GM18951 (cell line): ENCODE measurements at regions of chr14 and their contacts with region 1.

Region 1: GRCh38 chr14:61025251-61026223 is 44.5 kb downstream of the SLC38A6 start:
- POLR2A ChIP-seq: no peak

Region 2: GRCh38 chr14:60632777-60633176 is 392.8 kb before region 1 on chr14:
- in situ Hi-C with region 1: loop called (anchors 5 kb)
- POLR2A ChIP-seq: no peak